Endothelial cell of umbilical vein (primary cell): ENCODE measurements at regions of chr11 and their contacts with region 1.

Region 1: GRCh38 chr11:47642099-47642855 is at the start of gene MTCH2:
- DNase-seq: peak; percentile 98
- H3K4me3 ChIP-seq: peak within 1 kb of the TSS; percentile 70 to 95 (median 93)
- H3K27ac ChIP-seq: peak within 1 kb of the TSS; percentile 75
- H3K4me1 ChIP-seq: peaks cover 11% of the 10 kb centered on the region
- H3K27me3 ChIP-seq: no peaks in the 10 kb centered on the region
- CTCF ChIP-seq: peak in 1 of 2 donors; percentile 11
- POLR2A ChIP-seq: peak; percentile 93
- total RNA-seq, gene MTCH2: 134 and 138 TPM in 2 replicates

Region 2: GRCh38 chr11:47466701-47467250 is 175.5 kb before region 1 on chr11:
- CTCF ChIA-PET with region 1: no interaction called
- POLR2A ChIA-PET with region 1: no interaction called
- dilution Hi-C with region 1: no loop called
- intact Hi-C with region 1: no loop called
- DNase-seq: peak; percentile 80
- H3K4me3 ChIP-seq: peak overlapping the region in 1 of 3 experiments; percentile 10
- H3K27ac ChIP-seq: peak overlapping the region; percentile 36
- H3K4me1 ChIP-seq: peaks cover 37% of the 10 kb centered on the region
- H3K27me3 ChIP-seq: no peaks in the 10 kb centered on the region
- CTCF ChIP-seq: no peak
- POLR2A ChIP-seq: no peak

Region 3: DNA sequence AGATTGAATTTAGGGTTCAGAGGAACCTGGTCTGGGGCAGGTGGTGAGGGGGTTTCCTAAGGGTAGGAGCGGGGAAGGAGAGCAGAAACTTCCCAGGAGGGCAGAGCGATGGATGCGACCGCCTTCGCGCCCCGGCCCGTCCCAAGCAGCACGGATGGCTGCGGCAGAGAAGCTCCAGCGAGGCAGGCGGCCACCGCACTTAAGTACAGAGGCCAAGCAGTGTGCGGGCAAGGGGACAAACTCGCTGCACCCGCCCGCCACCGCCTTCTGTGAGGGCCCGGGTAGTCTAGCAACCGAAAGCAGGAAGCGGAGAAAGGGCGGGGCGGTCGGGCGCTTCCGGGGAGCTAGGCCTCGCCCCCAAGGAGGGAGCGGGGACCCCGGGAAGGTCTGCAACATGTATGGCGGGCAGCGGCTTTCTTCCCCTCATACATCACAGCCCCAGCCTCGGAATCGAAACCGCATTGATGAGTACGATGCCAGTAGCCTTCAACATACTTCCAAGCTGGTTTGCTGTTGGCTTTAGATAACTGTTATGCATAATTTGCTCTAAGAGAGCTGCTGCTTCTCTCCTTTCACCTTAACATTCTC is 72.9 kb after region 1 on chr11 and contains the start of gene AGBL2:
- CTCF ChIA-PET with region 1: interaction called, 3 read pairs
- POLR2A ChIA-PET with region 1: no interaction called
- dilution Hi-C with region 1: no loop called
- intact Hi-C with region 1: loop called (anchors 2 kb)
- DNase-seq: peak; percentile 33
- H3K4me3 ChIP-seq: peak within 1 kb of the TSS; percentile 44 to 68 (median 58)
- H3K27ac ChIP-seq: no peak within 1 kb of the TSS
- H3K4me1 ChIP-seq: peaks cover 3% of the 10 kb centered on the region
- H3K27me3 ChIP-seq: no peaks in the 10 kb centered on the region
- CTCF ChIP-seq: no peak
- POLR2A ChIP-seq: peak; percentile 51
- total RNA-seq, gene AGBL2: 0.86 TPM in 1 of 2 replicates, not detected in the other

Region 4: GRCh38 chr11:47766305-47767227 is 124.3 kb after region 1 on chr11:
- CTCF ChIA-PET with region 1: no interaction called
- POLR2A ChIA-PET with region 1: no interaction called
- dilution Hi-C with region 1: no loop called
- intact Hi-C with region 1: loop called (anchors 1 kb)
- DNase-seq: peak; percentile 73
- H3K4me3 ChIP-seq: peak overlapping the region; percentile 61 to 97 (median 62)
- H3K27ac ChIP-seq: peak overlapping the region; percentile 81
- H3K4me1 ChIP-seq: peaks cover 14% of the 10 kb centered on the region
- H3K27me3 ChIP-seq: no peaks in the 10 kb centered on the region
- CTCF ChIP-seq: no peak
- POLR2A ChIP-seq: no peak

Region 5: DNA sequence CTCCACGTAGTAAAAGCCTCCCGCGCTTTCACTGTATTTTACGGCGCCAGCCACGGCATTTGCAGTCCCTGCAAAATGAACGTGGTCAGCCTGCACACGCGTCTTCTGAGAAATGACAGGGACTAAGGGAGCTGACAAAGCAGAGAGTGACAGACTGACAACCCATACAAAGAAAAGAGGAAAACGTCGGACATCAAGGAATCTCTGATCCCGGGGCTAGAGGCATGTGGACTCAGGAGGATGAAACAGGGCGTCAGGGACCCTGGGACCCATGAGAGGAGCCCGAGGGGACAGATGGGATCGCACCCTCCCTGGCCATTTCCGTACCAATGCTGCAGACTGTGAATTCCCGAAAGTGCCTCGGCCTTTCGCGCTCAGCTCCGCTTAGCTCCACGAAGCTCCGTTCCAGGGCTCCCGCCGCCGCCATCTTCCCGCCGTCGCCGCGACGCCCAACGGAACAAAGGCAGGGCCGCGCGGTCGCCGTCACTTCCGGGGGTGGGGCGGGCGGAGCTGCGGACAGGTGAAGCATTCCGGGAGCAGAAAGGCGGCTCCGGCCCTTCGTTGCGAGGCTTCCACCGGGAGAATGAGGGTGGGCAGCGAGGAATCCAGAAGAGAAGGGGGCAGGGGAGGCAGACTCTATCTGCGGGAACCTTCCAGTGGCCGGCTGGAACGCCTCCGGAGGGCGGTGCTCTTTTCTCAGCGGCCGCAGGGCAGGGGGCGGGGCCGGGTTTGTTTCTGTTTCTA is 205.8 kb after region 1 on chr11 and contains the start of gene NUP160:
- CTCF ChIA-PET with region 1: no interaction called
- POLR2A ChIA-PET with region 1: no interaction called
- dilution Hi-C with region 1: no loop called
- intact Hi-C with region 1: loop called (anchors 5 kb)
- DNase-seq: peak; percentile 74
- H3K4me3 ChIP-seq: peak within 1 kb of the TSS; percentile 9 to 88 (median 68)
- H3K27ac ChIP-seq: peak within 1 kb of the TSS; percentile 56
- H3K4me1 ChIP-seq: peaks cover 10% of the 10 kb centered on the region
- H3K27me3 ChIP-seq: no peaks in the 10 kb centered on the region
- CTCF ChIP-seq: no peak
- POLR2A ChIP-seq: peak; percentile 94
- total RNA-seq, gene NUP160: 35.1 and 39.6 TPM in 2 replicates